IMR-90 (cell line): ENCODE measurements at regions of chr2 and their contacts with region 1.

Region 1: DNA sequence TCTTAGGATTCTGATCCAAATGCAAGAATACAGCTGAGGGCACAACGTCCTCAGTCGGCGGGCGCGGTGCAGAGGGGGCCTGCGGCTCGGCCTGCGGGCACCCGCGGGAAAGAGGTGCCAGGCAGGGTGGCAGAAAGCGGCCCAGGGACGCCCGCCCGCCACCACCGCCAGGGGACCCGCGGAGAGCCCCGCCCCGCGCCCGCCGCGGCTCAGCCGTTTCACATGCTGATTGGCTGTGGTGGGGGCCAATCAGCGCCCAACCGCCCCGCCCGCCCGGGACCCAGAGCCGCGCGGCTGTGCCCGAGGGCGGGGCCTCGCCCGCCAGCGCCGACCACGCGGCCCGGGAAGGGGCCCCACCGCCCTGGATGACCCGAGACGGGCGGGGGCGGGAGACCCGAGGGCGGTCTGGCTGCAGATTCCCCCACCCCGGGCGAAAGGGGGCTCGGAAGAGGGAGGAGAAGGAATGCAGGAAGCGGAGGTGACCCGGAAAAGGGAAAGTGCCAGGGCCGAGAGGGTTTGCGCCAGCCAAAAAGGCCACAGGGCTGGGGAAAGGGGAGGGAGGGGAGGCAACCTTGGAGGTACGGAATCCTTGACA is 8.0 kb downstream of the IRS1 start:
- DNase-seq: peak; percentile 75
- ATAC-seq: peak; percentile 85
- H3K4me3 ChIP-seq: peak overlapping the region; percentile 78
- H3K27ac ChIP-seq: peak overlapping the region; percentile 97
- H3K4me1 ChIP-seq: peaks cover 8% of the 10 kb centered on the region
- H3K27me3 ChIP-seq: no peaks in the 10 kb centered on the region
- CTCF ChIP-seq: peak; percentile 21; the same call in 1 of the 2 replicates
- POLR2A ChIP-seq: 0 out of 2 replicates have a peak, but pooled peaks have one; percentile 29
- RAD21 ChIP-seq: no peak

Region 2: GRCh38 chr2:225122583-225123486 is 1668.7 kb before region 1 on chr2:
- CTCF ChIA-PET with region 1: no interaction called
- POLR2A ChIA-PET with region 1: no interaction called
- dilution Hi-C with region 1: no loop called
- in situ Hi-C with region 1: loop called (anchors 25 kb)
- intact Hi-C with region 1: no loop called
- DNase-seq: peak; percentile 47
- ATAC-seq: peak; percentile 70; the same call in 1 of the 2 replicates
- H3K4me3 ChIP-seq: no peak overlapping the region
- H3K27ac ChIP-seq: no peak overlapping the region
- H3K4me1 ChIP-seq: no peaks in the 10 kb centered on the region; the same call in 1 of the 2 replicates
- H3K27me3 ChIP-seq: no peaks in the 10 kb centered on the region
- CTCF ChIP-seq: peak; percentile 65
- POLR2A ChIP-seq: no peak
- RAD21 ChIP-seq: peak; percentile 72

Region 3: GRCh38 chr2:225937713-225938112 is 853.9 kb before region 1 on chr2:
- CTCF ChIA-PET with region 1: no interaction called
- POLR2A ChIA-PET with region 1: no interaction called
- dilution Hi-C with region 1: no loop called
- in situ Hi-C with region 1: no loop called
- intact Hi-C with region 1: no loop called
- DNase-seq: peak; percentile 36
- ATAC-seq: no peak
- H3K4me3 ChIP-seq: no peak overlapping the region
- H3K27ac ChIP-seq: no peak overlapping the region
- H3K4me1 ChIP-seq: 0 out of 2 replicates have a peak, but pooled peaks cover 2% of the 10 kb centered on the region
- H3K27me3 ChIP-seq: no peaks in the 10 kb centered on the region
- CTCF ChIP-seq: no peak
- POLR2A ChIP-seq: no peak
- RAD21 ChIP-seq: no peak

Region 4: GRCh38 chr2:226118471-226119430 is 672.8 kb before region 1 on chr2:
- CTCF ChIA-PET with region 1: interaction called, 3 read pairs
- POLR2A ChIA-PET with region 1: no interaction called
- dilution Hi-C with region 1: no loop called
- in situ Hi-C with region 1: loop called (anchors 5 kb)
- intact Hi-C with region 1: loop called (anchors 1 kb)
- DNase-seq: peak; percentile 91
- ATAC-seq: peak; percentile 42
- H3K4me3 ChIP-seq: peak overlapping the region; percentile 6; the same call in 1 of the 2 replicates
- H3K27ac ChIP-seq: peak overlapping the region; percentile 92
- H3K4me1 ChIP-seq: peaks cover 8% of the 10 kb centered on the region
- H3K27me3 ChIP-seq: no peaks in the 10 kb centered on the region
- CTCF ChIP-seq: no peak
- POLR2A ChIP-seq: no peak
- RAD21 ChIP-seq: no peak; the same call in 1 of the 2 replicates

Region 5: GRCh38 chr2:226334981-226335720 is 456.4 kb before region 1 on chr2:
- CTCF ChIA-PET with region 1: no interaction called
- POLR2A ChIA-PET with region 1: no interaction called
- dilution Hi-C with region 1: no loop called
- in situ Hi-C with region 1: no loop called
- intact Hi-C with region 1: loop called (anchors 10 kb)
- DNase-seq: peak; percentile 81
- ATAC-seq: peak; percentile 74
- H3K4me3 ChIP-seq: no peak overlapping the region
- H3K27ac ChIP-seq: peak overlapping the region; percentile 51; the same call in 1 of the 2 replicates
- H3K4me1 ChIP-seq: peaks cover 2% of the 10 kb centered on the region
- H3K27me3 ChIP-seq: no peaks in the 10 kb centered on the region
- CTCF ChIP-seq: no peak
- POLR2A ChIP-seq: no peak
- RAD21 ChIP-seq: no peak

Region 6: GRCh38 chr2:226478109-226478809 is 313.3 kb before region 1 on chr2:
- CTCF ChIA-PET with region 1: interaction called, 3 read pairs
- POLR2A ChIA-PET with region 1: interaction called, 3 read pairs
- dilution Hi-C with region 1: no loop called
- in situ Hi-C with region 1: no loop called
- intact Hi-C with region 1: loop called (anchors 1 kb)
- DNase-seq: peak; percentile 96
- ATAC-seq: peak; percentile 87
- H3K4me3 ChIP-seq: no peak overlapping the region
- H3K27ac ChIP-seq: peak overlapping the region; percentile 96
- H3K4me1 ChIP-seq: peaks cover 29% of the 10 kb centered on the region
- H3K27me3 ChIP-seq: no peaks in the 10 kb centered on the region
- CTCF ChIP-seq: no peak
- POLR2A ChIP-seq: no peak
- RAD21 ChIP-seq: peak; percentile 7

Region 7: GRCh38 chr2:226583715-226584114 is 207.9 kb before region 1 on chr2:
- CTCF ChIA-PET with region 1: no interaction called
- POLR2A ChIA-PET with region 1: no interaction called
- dilution Hi-C with region 1: no loop called
- in situ Hi-C with region 1: no loop called
- intact Hi-C with region 1: loop called (anchors 5 kb)
- DNase-seq: peak; percentile 89
- ATAC-seq: peak; percentile 90
- H3K4me3 ChIP-seq: no peak overlapping the region
- H3K27ac ChIP-seq: peak overlapping the region; percentile 34
- H3K4me1 ChIP-seq: peaks cover 23% of the 10 kb centered on the region; the same call in 1 of the 2 replicates
- H3K27me3 ChIP-seq: no peaks in the 10 kb centered on the region
- CTCF ChIP-seq: no peak
- POLR2A ChIP-seq: no peak
- RAD21 ChIP-seq: 0 out of 2 replicates have a peak, but pooled peaks have one; percentile 10

Region 8: GRCh38 chr2:226742347-226742746 is 49.2 kb before region 1 on chr2:
- CTCF ChIA-PET with region 1: no interaction called
- POLR2A ChIA-PET with region 1: no interaction called
- dilution Hi-C with region 1: no loop called
- in situ Hi-C with region 1: no loop called
- intact Hi-C with region 1: loop called (anchors 5 kb)
- DNase-seq: peak; percentile 13
- ATAC-seq: no peak
- H3K4me3 ChIP-seq: no peak overlapping the region
- H3K27ac ChIP-seq: peak overlapping the region; percentile 62; the same call in 1 of the 2 replicates
- H3K4me1 ChIP-seq: peaks cover 26% of the 10 kb centered on the region
- H3K27me3 ChIP-seq: no peaks in the 10 kb centered on the region
- CTCF ChIP-seq: no peak
- POLR2A ChIP-seq: no peak
- RAD21 ChIP-seq: no peak